ENCODE measurements at regions of chr2 and their contacts with region 1.

Region 1: DNA sequence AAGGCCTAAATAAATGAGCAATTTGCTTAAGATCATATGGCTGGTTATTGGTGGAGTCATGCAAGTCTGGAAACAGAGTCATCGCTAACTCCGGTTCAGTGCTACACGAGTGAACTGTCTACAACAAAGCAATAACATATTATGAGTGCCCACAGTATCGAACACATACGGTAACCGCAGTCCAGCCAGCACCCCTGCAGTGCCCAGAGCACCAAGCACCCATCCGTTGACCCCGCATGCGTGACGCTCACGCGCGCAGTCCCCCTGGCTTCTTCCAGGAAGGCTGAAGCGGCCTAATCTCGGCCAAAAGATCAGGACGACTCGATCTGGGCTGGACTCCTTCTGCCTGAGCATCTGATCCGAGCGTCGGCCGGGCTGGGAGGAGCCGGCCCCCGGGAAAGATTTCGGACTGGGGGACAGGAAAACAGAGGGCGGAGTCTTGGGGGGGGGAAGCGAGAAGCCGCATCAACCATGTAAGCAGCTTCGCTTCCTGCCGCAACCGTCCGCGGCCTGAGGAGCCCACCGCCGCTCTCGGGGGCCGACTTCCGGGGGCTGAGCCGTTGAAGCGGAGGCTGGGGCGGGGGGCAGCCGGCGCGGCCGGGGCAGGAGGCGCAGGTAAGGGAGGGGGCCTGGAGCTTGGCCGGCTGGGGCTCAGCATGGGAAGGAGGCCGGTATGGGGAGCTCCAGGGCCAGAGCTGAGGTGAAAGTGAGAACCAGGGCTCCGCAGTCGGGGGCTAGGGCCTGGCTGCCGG is at the start of gene PIKFYVE:
- DNase-seq: peak; percentile 94
- ATAC-seq: peak; percentile 84
- H3K4me3 Mint-ChIP-seq: peak within 1 kb of the TSS; percentile 84
- H3K27ac Mint-ChIP-seq: peak within 1 kb of the TSS; percentile 94
- H3K4me1 Mint-ChIP-seq: peaks cover 33% of the 10 kb centered on the region
- H3K27me3 Mint-ChIP-seq: no peaks in the 10 kb centered on the region
- total RNA-seq, gene PIKFYVE: 19.3 to 21.5 TPM

Region 2: GRCh38 chr2:207769597-207770486 is 496.1 kb before region 1 on chr2 and contains the start of gene FZD5:
- CTCF ChIA-PET with region 1: no interaction called
- POLR2A ChIA-PET with region 1: no interaction called
- intact Hi-C with region 1: loop called in 1 of 2 experiments (anchors 1 kb)
- DNase-seq: peak; percentile 90
- ATAC-seq: peak; percentile 83
- H3K4me3 Mint-ChIP-seq: peak within 1 kb of the TSS; percentile 79
- H3K27ac Mint-ChIP-seq: no peak within 1 kb of the TSS
- H3K4me1 Mint-ChIP-seq: peaks cover 27% of the 10 kb centered on the region
- H3K27me3 Mint-ChIP-seq: peaks cover 41% of the 10 kb centered on the region
- total RNA-seq, gene FZD5: 1.1 to 1.3 TPM

Region 3: DNA sequence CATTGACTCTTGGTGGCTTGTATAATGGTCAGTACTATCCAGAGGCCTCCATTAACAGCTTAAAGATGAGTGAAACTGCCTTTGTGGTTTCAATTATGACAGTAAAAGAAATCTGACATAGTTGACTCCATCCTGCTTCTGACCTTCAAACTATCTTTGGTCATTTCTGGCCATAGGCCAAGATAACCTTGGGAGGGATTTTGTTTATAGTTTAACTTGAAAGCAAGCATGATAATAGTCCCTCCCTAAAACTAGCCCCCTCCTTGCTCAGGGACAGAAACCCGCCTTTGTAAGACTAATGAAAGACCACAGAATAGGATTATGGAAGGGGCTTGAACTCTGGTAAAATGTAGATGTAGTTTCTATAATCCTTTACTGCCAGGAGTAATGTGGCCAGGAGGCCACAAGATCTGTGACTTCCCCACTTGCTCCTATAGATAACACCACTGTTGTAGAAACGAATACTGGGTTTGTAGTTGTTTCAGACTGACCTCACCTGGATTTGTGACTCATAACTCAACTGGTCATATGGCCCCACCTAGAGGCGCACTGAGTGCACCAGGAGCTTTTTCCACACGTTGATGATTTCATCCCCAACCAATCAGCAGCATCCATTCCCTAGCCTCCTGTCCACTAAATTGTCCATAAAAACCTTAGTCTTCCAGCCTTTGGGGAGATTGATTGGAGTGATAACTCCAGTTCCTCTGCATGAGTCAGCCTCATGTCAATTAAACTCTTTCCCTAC is 232.0 kb before region 1 on chr2:
- CTCF ChIA-PET with region 1: no interaction called
- POLR2A ChIA-PET with region 1: no interaction called
- intact Hi-C with region 1: no loop called
- DNase-seq: peak; percentile 64
- ATAC-seq: peak; percentile 93
- H3K4me3 Mint-ChIP-seq: no peak overlapping the region
- H3K27ac Mint-ChIP-seq: no peak overlapping the region
- H3K4me1 Mint-ChIP-seq: no peaks in the 10 kb centered on the region
- H3K27me3 Mint-ChIP-seq: no peaks in the 10 kb centered on the region

Region 4: DNA sequence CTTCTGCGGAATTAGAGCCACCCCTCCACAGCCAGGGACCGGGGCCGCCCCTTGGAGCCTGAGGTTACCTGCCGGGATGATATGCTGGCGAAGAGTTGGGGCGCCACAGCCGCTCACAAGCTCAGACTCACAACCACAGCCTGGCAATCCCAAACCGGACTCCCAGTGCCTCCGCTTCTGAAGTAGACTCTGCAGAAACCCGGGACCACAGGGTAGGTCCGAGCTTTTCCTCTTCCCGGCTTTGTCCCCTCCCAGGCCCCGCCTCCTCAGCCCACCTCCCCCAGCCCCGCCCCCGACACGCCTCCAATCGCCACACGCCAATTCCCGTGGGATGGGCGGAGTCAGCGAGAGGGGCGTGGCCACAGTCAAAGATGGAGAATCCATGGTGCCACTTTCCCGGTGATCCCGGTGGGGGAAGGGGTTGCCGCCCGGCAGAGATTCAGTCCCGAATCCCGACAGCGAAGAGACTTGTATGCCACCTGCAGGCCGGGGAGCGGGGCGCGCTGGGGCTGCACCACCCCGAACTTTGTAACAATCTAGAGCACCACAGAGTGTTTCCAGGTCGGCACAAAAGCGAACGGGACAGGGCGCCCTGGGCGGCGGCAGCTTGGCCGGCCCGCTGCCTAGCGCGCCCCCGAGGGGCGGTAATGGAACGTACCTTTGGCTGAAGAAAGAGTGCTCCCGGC is 11.0 kb before region 1 on chr2 and contains the start of gene IDH1:
- CTCF ChIA-PET with region 1: interaction called, 49 read pairs
- POLR2A ChIA-PET with region 1: interaction called, 6 read pairs
- intact Hi-C with region 1: loop called (anchors 1 kb)
- DNase-seq: peak; percentile 97
- ATAC-seq: peak; percentile 80
- H3K4me3 Mint-ChIP-seq: peak within 1 kb of the TSS; percentile 85
- H3K27ac Mint-ChIP-seq: peak within 1 kb of the TSS; percentile 42
- H3K4me1 Mint-ChIP-seq: peaks cover 18% of the 10 kb centered on the region
- H3K27me3 Mint-ChIP-seq: no peaks in the 10 kb centered on the region
- total RNA-seq, gene IDH1: 21.1 to 23.7 TPM

Region 5: GRCh38 chr2:208466151-208466919 is 200.4 kb after region 1 on chr2:
- CTCF ChIA-PET with region 1: no interaction called
- POLR2A ChIA-PET with region 1: no interaction called
- intact Hi-C with region 1: no loop called
- DNase-seq: peak; percentile 36
- ATAC-seq: no peak
- H3K4me3 Mint-ChIP-seq: no peak overlapping the region
- H3K27ac Mint-ChIP-seq: no peak overlapping the region
- H3K4me1 Mint-ChIP-seq: no peaks in the 10 kb centered on the region
- H3K27me3 Mint-ChIP-seq: peaks cover 9% of the 10 kb centered on the region

Region 6: GRCh38 chr2:209423562-209424198 is 1157.7 kb after region 1 on chr2 and contains the start of gene MAP2:
- CTCF ChIA-PET with region 1: no interaction called
- POLR2A ChIA-PET with region 1: no interaction called
- intact Hi-C with region 1: loop called in 1 of 2 experiments (anchors 10 kb)
- DNase-seq: peak; percentile 87
- ATAC-seq: peak; percentile 98
- H3K4me3 Mint-ChIP-seq: peak within 1 kb of the TSS; percentile 67
- H3K27ac Mint-ChIP-seq: no peak within 1 kb of the TSS
- H3K4me1 Mint-ChIP-seq: peaks cover 10% of the 10 kb centered on the region
- H3K27me3 Mint-ChIP-seq: peaks cover 32% of the 10 kb centered on the region
- total RNA-seq, gene MAP2: 0.34 to 0.39 TPM

Region 7: GRCh38 chr2:210171309-210172203 is 1905.6 kb after region 1 on chr2 and contains the start of gene KANSL1L:
- CTCF ChIA-PET with region 1: no interaction called
- POLR2A ChIA-PET with region 1: no interaction called
- intact Hi-C with region 1: loop called in 1 of 2 experiments (anchors 1 kb)
- DNase-seq: peak; percentile 97
- ATAC-seq: peak; percentile 75
- H3K4me3 Mint-ChIP-seq: peak within 1 kb of the TSS; percentile 98
- H3K27ac Mint-ChIP-seq: peak within 1 kb of the TSS; percentile 97
- H3K4me1 Mint-ChIP-seq: peaks cover 33% of the 10 kb centered on the region
- H3K27me3 Mint-ChIP-seq: peaks cover 4% of the 10 kb centered on the region
- total RNA-seq, gene KANSL1L: 4.5 to 6.0 TPM